AG04449 (cell line): ENCODE measurements at regions of chr15 and their contacts with region 1.

Region 1: GRCh38 chr15:51907136-51907914 is 64.3 kb downstream of the LEO1 start:
- DNase-seq: no peak
- H3K4me3 ChIP-seq: no peak overlapping the region
- CTCF ChIP-seq: no peak

Region 2: GRCh38 chr15:51861557-51862359 is 45.6 kb before region 1 on chr15:
- CTCF ChIA-PET with region 1: no interaction called
- POLR2A ChIA-PET with region 1: no interaction called
- DNase-seq: no peak
- H3K4me3 ChIP-seq: no peak overlapping the region
- CTCF ChIP-seq: no peak

Region 3: GRCh38 chr15:51883438-51883837 is 23.9 kb before region 1 on chr15:
- CTCF ChIA-PET with region 1: interaction called, 121 read pairs
- POLR2A ChIA-PET with region 1: no interaction called
- DNase-seq: peak; percentile 70
- H3K4me3 ChIP-seq: no peak overlapping the region
- CTCF ChIP-seq: no peak

Region 4: GRCh38 chr15:51888593-51889195 is 18.6 kb before region 1 on chr15:
- CTCF ChIA-PET with region 1: interaction called, 121 read pairs
- POLR2A ChIA-PET with region 1: no interaction called
- DNase-seq: no peak
- H3K4me3 ChIP-seq: no peak overlapping the region
- CTCF ChIP-seq: peak; percentile 58

Region 5: DNA sequence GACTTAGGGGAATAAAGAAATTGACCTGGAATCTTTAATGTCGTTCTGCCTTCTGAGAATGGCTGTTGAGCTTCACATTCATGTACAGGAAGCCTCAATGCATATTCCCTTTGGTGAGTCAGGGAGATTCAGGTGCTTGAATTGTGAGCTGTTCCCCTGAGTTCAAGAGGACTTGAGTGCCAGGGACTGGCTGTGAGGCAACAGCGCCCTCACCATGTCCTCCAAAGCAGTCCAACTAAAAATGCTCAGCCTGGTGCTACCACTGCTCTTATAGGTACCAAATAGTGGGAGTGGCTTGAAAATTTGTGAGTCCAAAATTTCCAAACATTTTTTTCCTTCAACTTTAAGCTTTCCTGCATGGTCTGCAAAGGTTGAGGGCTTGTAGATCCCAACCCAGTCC is 10.2 kb after region 1 on chr15:
- CTCF ChIA-PET with region 1: interaction called, 12 read pairs
- POLR2A ChIA-PET with region 1: no interaction called
- DNase-seq: no peak
- H3K4me3 ChIP-seq: no peak overlapping the region
- CTCF ChIP-seq: peak; percentile 32